PC-9 (cell line): ENCODE measurements at regions of chr10 and their contacts with region 1.

Region 1: GRCh38 chr10:80444646-80445319 is 9.3 kb upstream of the TSPAN14 start:
- DNase-seq: peak; percentile 48 to 60
- H3K4me3 ChIP-seq: no peak overlapping the region
- H3K27ac ChIP-seq: no peak overlapping the region
- H3K4me1 ChIP-seq: peaks cover 23% of the 10 kb centered on the region
- H3K27me3 ChIP-seq: no peaks in the 10 kb centered on the region
- CTCF ChIP-seq: peak; percentile 73

Region 2: DNA sequence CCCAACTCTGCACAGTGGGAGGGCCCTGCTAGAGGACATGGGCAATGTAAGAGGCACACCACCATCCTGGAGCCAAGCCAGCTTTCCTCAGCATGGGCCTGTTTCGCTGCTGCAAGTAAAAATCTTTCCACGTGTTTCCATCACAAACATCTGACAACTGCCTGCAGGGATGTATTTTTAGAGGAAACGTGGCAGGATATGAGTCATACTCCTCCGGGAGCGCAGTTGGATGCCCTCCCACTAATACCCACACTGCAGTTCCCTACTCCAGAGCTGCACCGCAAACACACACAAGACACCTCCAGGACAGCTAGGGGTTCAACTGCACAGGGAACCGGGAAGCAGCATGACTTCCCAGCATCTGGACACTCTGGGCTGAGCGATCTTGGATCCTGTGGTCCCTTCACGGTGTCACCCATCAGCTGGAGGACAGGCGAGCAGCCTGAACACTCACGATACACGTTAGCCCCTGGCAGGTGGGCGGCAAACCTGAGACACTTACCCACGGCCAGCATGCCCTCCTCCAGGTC is 286.1 kb before region 1 on chr10:
- CTCF ChIA-PET with region 1: no interaction called
- POLR2A ChIA-PET with region 1: no interaction called
- intact Hi-C with region 1: no loop called
- DNase-seq: peak; percentile 81 to 94
- H3K4me3 ChIP-seq: no peak overlapping the region
- H3K27ac ChIP-seq: peak overlapping the region; percentile 32
- H3K4me1 ChIP-seq: peaks cover 55% of the 10 kb centered on the region
- H3K27me3 ChIP-seq: no peaks in the 10 kb centered on the region
- CTCF ChIP-seq: no peak

Region 3: GRCh38 chr10:80429521-80429966 is 15.2 kb before region 1 on chr10:
- CTCF ChIA-PET with region 1: interaction called, 14 read pairs
- POLR2A ChIA-PET with region 1: interaction called, 14 read pairs
- intact Hi-C with region 1: no loop called
- DNase-seq: peak; percentile 92 to 96
- H3K4me3 ChIP-seq: no peak overlapping the region
- H3K27ac ChIP-seq: peak overlapping the region; percentile 30
- H3K4me1 ChIP-seq: peaks cover 27% of the 10 kb centered on the region
- H3K27me3 ChIP-seq: no peaks in the 10 kb centered on the region
- CTCF ChIP-seq: no peak

Region 4: DNA sequence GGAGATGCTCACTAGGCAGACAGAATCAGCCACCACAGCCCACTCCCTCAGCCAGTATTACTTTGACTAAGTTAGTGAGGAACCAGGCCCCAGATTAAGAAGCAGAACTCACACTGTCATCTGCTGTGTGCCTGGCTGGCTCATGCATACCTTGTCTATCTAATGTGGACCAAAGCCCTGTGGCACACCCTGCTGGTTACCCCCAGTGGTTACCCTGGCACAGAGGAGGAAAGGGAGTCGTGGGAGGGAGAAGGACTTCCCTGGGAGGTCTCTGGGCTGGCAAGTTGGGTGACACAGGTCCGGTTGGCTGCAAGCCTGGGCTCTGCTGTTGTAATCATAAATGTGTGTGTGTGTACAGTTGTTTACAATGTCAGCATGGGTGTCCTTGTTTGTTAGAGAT is 85.5 kb after region 1 on chr10:
- CTCF ChIA-PET with region 1: no interaction called
- POLR2A ChIA-PET with region 1: no interaction called
- intact Hi-C with region 1: loop called (anchors 1 kb)
- DNase-seq: peak; percentile 62 to 67
- H3K4me3 ChIP-seq: no peak overlapping the region
- H3K27ac ChIP-seq: no peak overlapping the region
- H3K4me1 ChIP-seq: no peaks in the 10 kb centered on the region
- H3K27me3 ChIP-seq: no peaks in the 10 kb centered on the region
- CTCF ChIP-seq: peak; percentile 75

Region 5: GRCh38 chr10:80599424-80599847 is 154.7 kb after region 1 on chr10:
- CTCF ChIA-PET with region 1: no interaction called
- POLR2A ChIA-PET with region 1: no interaction called
- intact Hi-C with region 1: loop called (anchors 5 kb)
- DNase-seq: peak in 1 of 2 experiments; percentile 5
- H3K4me3 ChIP-seq: no peak overlapping the region
- H3K27ac ChIP-seq: no peak overlapping the region
- H3K4me1 ChIP-seq: no peaks in the 10 kb centered on the region
- H3K27me3 ChIP-seq: 0 out of 2 replicates have a peak, but pooled peaks cover 4% of the 10 kb centered on the region
- CTCF ChIP-seq: peak; percentile 77

Region 6: DNA sequence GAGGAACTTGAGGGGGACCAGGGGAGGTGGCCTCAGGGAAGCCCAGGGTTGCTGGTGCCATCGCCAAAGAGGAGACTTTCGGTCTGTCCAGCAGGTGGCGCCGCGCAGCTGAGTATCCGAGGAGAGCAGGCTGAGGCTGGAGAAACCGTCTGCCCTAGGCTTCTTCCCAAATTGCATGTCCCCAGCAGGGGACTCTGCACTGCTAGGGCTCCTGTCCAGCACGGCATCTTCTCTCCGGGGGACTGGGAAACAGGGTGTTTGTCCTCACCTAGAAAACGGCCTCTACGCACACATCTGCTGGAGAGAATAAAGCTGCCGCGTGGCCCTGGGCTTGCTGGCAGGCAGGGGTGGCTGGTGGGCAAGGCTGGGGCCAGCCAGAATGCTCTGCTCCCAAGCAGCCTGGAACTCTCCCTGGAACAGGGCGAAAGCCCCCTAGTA is 254.8 kb after region 1 on chr10:
- CTCF ChIA-PET with region 1: no interaction called
- POLR2A ChIA-PET with region 1: no interaction called
- intact Hi-C with region 1: loop called (anchors 5 kb)
- DNase-seq: peak; percentile 49 to 69
- H3K4me3 ChIP-seq: no peak overlapping the region
- H3K27ac ChIP-seq: no peak overlapping the region
- H3K4me1 ChIP-seq: no peaks in the 10 kb centered on the region
- H3K27me3 ChIP-seq: peaks cover 82% of the 10 kb centered on the region
- CTCF ChIP-seq: peak; percentile 90

Region 7: GRCh38 chr10:81514811-81515210 is 1070.0 kb after region 1 on chr10:
- CTCF ChIA-PET with region 1: no interaction called
- POLR2A ChIA-PET with region 1: no interaction called
- intact Hi-C with region 1: no loop called
- DNase-seq: no peak
- H3K4me3 ChIP-seq: no peak overlapping the region
- H3K27ac ChIP-seq: no peak overlapping the region
- H3K4me1 ChIP-seq: no peaks in the 10 kb centered on the region
- H3K27me3 ChIP-seq: no peaks in the 10 kb centered on the region
- CTCF ChIP-seq: no peak